HEK293T (cell line): ENCODE measurements at regions of chr12 and their contacts with region 1.

Region 1: GRCh38 chr12:65169320-65170208 is at the start of gene LEMD3:
- DNase-seq: peak; percentile 92

Region 2: GRCh38 chr12:65182012-65182739 is 12.6 kb after region 1 on chr12:
- CTCF ChIA-PET with region 1: no interaction called
- POLR2A ChIA-PET with region 1: interaction called, 11 read pairs
- DNase-seq: no peak

Region 3: DNA sequence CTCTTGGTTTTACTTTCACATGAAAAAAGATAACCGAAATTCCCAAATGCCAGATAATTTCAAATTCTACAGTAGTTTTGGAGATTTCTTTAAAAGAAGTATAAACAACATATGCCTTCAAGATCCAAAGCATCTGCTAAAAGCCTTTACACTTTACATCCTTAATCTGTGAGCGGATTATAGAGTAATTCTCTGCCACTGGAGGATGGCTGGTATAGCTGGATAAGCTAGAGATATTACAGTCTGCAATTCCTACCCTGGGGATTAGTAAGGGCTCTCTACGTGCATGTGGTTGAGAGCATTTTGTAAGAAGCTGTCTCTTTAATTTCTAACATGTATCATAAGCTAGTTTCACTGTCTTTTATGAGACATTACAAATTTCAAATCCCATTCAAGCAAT is 414.5 kb after region 1 on chr12:
- CTCF ChIA-PET with region 1: no interaction called
- POLR2A ChIA-PET with region 1: no interaction called
- DNase-seq: no peak